ENCODE measurements at regions of chr20 and their contacts with region 1.

Region 1: GRCh38 chr20:58864350-58864749 is 11.8 kb downstream of the GNAS start:
- DNase-seq: no peak
- ATAC-seq: peak; percentile 76
- H3K4me3 ChIP-seq: no peak overlapping the region
- H3K27ac ChIP-seq: no peak overlapping the region
- H3K4me1 ChIP-seq: no peaks in the 10 kb centered on the region
- H3K27me3 ChIP-seq: no peaks in the 10 kb centered on the region
- CTCF ChIP-seq: peak; percentile 35 to 54 (median 46); a peak in 5 of 6 replicates
- EP300 ChIP-seq: no peak
- POLR2A ChIP-seq: no peak
- RAD21 ChIP-seq: peak; percentile 83

Region 2: DNA sequence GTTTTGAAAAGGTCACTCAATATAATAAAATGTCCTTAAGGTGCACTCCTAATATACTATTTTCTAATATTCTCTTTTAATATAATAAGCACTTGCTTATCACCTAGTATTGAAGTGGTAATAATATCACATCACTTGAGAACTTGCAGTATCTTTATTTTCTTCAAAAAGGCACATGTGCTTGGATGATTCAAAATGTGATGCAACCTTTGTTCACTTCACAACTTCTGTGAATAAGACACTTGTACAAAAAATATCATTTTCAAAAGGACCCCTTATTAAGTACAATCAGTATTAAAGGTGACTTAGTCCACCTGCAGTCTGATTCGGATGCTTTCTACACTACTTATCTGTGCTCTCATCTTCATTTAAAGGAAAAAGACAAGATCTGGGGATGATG is 174.9 kb after region 1 on chr20:
- CTCF ChIA-PET with region 1: no interaction called
- POLR2A ChIA-PET with region 1: no interaction called
- RAD21 ChIA-PET with region 1: no interaction called
- SMC1A ChIA-PET with region 1: no interaction called
- in situ Hi-C with region 1: no loop called
- intact Hi-C with region 1: no loop called
- DNase-seq: no peak
- ATAC-seq: no peak
- H3K4me3 ChIP-seq: peak overlapping the region; percentile 89
- H3K27ac ChIP-seq: peak overlapping the region; percentile 11; the same call in 1 of the 2 replicates
- H3K4me1 ChIP-seq: peaks cover 13% of the 10 kb centered on the region
- H3K27me3 ChIP-seq: no peaks in the 10 kb centered on the region
- CTCF ChIP-seq: no peak
- EP300 ChIP-seq: no peak
- POLR2A ChIP-seq: no peak
- RAD21 ChIP-seq: no peak

Region 3: DNA sequence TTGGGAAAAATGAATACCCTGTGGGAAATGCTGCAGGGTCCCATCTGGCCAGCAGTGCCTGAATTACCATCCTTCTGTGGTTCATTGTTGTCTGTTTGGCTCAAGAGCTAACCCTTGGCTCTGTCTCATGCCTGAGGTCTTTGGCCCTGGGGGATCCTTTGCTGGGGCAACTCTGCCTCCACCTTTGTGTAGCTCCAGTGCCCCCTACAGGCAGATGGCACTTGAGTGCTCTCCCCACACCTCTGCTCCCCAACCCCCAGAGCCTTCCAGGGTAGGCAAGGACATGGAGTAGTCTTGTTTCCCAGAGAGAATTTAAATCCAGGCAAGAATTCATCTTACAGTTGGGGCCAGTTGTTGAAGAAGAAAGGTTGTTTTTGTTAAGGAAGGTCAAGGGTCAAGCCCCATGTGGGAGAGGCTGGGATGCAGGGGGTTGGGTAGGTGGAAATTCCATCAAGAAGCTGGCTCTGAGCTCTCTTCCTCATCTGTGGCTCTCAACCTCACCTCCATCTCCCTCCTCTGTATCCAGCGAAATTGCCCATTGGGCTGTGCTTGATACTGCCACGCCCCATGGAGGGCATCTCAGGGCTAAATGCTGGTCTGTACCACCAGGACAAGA is 343.5 kb after region 1 on chr20:
- CTCF ChIA-PET with region 1: interaction called, 36 read pairs
- POLR2A ChIA-PET with region 1: no interaction called
- RAD21 ChIA-PET with region 1: interaction called, 18 read pairs
- SMC1A ChIA-PET with region 1: interaction called, 19 read pairs
- in situ Hi-C with region 1: no loop called
- intact Hi-C with region 1: no loop called
- DNase-seq: peak; percentile 2
- ATAC-seq: peak; percentile 97
- H3K4me3 ChIP-seq: no peak overlapping the region
- H3K27ac ChIP-seq: no peak overlapping the region
- H3K4me1 ChIP-seq: no peaks in the 10 kb centered on the region
- H3K27me3 ChIP-seq: no peaks in the 10 kb centered on the region
- CTCF ChIP-seq: peak; percentile 76 to 91 (median 78)
- EP300 ChIP-seq: no peak
- POLR2A ChIP-seq: no peak
- RAD21 ChIP-seq: peak; percentile 87

Region 4: DNA sequence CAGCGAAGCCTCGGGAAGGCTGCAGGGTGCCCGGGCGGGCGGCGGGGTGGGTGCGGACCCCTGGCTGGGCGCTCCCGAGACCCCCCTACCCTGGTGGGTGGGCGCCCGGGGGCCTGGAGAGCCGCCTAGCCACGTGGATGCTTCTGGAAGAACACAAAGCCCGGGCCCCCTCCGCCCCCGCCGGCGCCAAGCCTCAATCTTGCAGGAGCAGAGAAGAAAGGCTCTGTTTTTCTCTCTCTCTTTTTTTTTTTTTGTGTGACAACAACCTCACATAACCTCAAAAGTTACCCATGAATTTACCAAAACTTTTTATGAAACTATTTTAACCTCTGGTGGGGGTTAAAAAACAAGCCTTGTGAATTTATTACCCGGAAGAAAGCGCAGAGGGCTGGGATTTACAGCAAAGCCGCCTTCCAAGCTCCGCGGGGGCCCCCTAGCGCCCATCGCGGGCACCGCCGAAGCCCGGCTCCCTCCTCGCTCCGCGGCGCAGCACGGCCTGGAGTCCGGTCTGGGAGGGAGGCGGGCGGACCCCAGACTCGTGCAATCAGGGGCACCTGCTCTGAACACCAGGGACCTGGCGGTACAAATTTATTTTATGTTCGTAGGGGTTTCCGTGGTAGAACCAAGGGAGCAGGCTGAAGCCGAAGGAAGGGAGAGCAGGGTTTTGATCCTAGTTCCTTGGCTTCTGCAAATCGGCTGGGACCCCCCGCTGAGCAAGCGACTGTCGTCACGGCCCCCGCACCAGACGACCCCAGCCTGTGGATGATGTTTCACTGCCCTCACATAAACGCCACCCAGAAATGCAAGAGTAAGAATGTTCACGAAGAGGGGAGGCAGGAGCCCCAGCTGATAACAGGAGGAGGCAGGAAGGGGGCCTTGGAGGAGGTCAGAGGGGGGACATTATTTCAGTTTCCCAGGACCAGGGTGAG is 358.2 kb after region 1 on chr20:
- CTCF ChIA-PET with region 1: interaction called, 22 read pairs
- POLR2A ChIA-PET with region 1: no interaction called
- RAD21 ChIA-PET with region 1: interaction called, 14 read pairs
- SMC1A ChIA-PET with region 1: interaction called, 13 read pairs
- in situ Hi-C with region 1: no loop called
- intact Hi-C with region 1: loop called (anchors 1 kb)
- DNase-seq: peak; percentile 1
- ATAC-seq: peak; percentile 100
- H3K4me3 ChIP-seq: peak overlapping the region; percentile 40; the same call in 1 of the 2 replicates
- H3K27ac ChIP-seq: no peak overlapping the region
- H3K4me1 ChIP-seq: no peaks in the 10 kb centered on the region
- H3K27me3 ChIP-seq: peaks cover 8 to 11% of the 10 kb centered on the region in 2 experiments
- CTCF ChIP-seq: peak; percentile 93 to 96 (median 94)
- EP300 ChIP-seq: no peak
- POLR2A ChIP-seq: no peak
- RAD21 ChIP-seq: peak; percentile 85

Region 5: DNA sequence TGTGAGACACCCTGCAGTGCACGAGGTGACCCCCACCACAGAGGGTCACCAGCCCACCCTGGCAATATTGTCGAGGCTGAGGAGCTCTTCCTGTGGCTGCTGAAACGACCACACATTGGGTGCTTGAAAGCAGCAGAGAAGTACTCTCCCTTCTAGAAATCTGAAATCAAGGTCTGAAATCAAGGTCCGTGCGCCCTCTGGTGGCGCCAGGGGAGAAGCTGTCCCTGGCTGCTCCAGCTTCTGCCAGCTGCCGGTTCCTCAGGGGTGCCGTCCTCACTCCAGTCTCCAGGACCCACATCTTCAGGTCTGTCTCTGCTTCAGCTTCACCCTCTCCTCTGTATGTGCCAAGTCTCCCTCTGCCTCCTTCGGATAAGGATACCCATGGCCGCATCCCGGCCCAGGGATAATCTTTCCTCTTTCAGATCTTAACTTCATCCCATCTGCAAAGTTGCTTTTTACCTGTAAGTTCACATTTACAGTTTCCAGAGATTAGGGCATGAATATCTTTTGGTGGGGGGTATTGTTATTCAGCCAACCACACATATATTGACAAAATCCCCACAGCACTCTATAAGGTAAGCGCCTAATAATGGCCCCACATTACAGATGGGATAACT is 631.7 kb after region 1 on chr20:
- CTCF ChIA-PET with region 1: interaction called, 10 read pairs
- POLR2A ChIA-PET with region 1: no interaction called
- RAD21 ChIA-PET with region 1: interaction called, 5 read pairs
- SMC1A ChIA-PET with region 1: interaction called, 4 read pairs
- in situ Hi-C with region 1: loop called (anchors 10 kb)
- intact Hi-C with region 1: loop called (anchors 2 kb)
- DNase-seq: no peak
- ATAC-seq: peak; percentile 86
- H3K4me3 ChIP-seq: no peak overlapping the region
- H3K27ac ChIP-seq: no peak overlapping the region
- H3K4me1 ChIP-seq: no peaks in the 10 kb centered on the region
- H3K27me3 ChIP-seq: peaks cover 0 to 2% of the 10 kb centered on the region in 2 experiments; a peak in 1 of 4 replicates
- CTCF ChIP-seq: peak; percentile 82 to 93 (median 90)
- EP300 ChIP-seq: no peak
- POLR2A ChIP-seq: no peak
- RAD21 ChIP-seq: peak; percentile 54